ENCODE measurements at regions of chr20 and their contacts with region 1.

Region 1: DNA sequence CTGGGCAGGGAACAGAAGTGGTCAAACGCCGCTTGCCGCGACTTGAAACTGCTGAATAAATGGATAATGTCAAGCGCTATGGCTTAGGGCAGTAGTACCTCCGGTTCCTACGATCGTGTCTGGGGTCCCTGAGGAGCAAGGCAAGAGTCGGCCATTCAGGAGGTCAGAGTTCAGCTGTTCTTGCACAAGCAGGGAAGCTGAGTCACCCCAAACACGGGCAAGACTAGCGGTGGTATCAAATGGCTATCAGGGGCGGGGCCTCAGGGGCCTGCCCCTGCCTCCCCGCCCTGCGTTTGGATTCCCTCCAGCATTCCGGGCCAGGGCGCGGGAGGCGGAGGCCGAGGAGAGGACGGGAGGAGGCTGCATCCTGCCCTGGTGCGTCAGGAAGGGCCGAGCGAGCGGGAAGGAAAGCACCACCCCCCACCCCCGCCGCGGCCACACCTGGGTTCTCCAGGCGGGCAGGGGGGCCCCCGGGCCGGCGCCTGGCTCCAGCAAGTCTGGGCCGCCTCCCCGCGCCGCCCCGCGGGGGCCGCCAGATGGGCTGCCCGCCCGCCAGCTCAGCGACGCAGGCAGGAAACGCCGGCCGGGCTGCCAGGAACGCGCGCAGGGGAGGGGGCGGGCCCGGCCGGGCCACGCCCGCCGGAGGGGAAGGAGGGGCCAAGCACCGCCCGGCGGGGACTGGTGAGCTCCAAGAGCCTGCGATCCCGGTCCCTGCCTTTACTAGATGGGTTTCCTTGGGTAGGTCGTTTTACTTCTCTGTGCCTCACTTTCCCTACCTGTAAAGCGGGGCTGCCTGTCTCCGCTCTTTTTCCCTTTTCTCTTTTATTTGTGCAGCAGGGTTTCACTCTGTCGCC is 32.2 kb upstream of the ID1 start:
- DNase-seq: peak; percentile 98
- ATAC-seq: peak; percentile 86
- H3K4me3 ChIP-seq: peak overlapping the region; percentile 54 to 75
- H3K27ac ChIP-seq: peak overlapping the region; percentile 99
- H3K4me1 ChIP-seq: peaks cover 56% of the 10 kb centered on the region
- H3K27me3 ChIP-seq: no peaks in the 10 kb centered on the region
- CTCF ChIP-seq: no peak

Region 2: DNA sequence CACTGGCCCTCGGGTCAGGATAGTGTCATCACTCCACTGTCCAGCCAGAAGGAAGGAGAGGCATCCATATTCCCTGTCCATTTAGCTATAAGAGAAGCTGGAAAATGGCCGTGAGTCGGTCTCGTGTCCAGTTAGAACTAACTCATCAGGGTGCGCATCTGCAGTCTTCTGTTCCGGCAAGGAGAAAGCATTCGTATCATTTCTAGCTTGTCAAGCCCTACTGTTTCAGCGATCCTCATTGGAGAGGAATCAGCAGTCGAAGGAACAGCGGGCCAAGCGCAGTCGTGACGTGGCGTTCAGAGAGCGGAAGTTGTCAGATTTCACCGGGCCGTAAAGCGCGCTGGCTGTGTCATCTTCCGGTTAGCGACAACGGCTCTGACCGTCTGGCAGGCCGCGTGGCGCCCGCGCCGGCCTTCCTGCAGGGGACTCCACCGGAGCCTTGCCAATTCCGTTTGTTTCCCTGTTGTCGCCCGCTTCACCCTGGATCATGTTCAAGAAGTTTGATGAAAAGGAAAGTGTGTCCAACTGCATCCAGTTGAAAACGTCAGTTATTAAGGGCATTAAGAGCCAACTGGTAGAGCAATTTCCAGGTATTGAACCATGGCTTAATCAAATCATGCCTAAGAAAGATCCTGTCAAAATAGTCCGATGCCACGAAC is 25.8 kb before region 1 on chr20:
- CTCF ChIA-PET with region 1: interaction called, 10 read pairs
- POLR2A ChIA-PET with region 1: interaction called, 4 read pairs
- in situ Hi-C with region 1: no loop called
- intact Hi-C with region 1: no loop called
- DNase-seq: peak; percentile 91
- ATAC-seq: peak; percentile 88
- H3K4me3 ChIP-seq: peak overlapping the region; percentile 57 to 67
- H3K27ac ChIP-seq: peak overlapping the region; percentile 94
- H3K4me1 ChIP-seq: peaks cover 3% of the 10 kb centered on the region; the same call in 1 of the 2 replicates
- H3K27me3 ChIP-seq: no peaks in the 10 kb centered on the region
- CTCF ChIP-seq: no peak

Region 3: DNA sequence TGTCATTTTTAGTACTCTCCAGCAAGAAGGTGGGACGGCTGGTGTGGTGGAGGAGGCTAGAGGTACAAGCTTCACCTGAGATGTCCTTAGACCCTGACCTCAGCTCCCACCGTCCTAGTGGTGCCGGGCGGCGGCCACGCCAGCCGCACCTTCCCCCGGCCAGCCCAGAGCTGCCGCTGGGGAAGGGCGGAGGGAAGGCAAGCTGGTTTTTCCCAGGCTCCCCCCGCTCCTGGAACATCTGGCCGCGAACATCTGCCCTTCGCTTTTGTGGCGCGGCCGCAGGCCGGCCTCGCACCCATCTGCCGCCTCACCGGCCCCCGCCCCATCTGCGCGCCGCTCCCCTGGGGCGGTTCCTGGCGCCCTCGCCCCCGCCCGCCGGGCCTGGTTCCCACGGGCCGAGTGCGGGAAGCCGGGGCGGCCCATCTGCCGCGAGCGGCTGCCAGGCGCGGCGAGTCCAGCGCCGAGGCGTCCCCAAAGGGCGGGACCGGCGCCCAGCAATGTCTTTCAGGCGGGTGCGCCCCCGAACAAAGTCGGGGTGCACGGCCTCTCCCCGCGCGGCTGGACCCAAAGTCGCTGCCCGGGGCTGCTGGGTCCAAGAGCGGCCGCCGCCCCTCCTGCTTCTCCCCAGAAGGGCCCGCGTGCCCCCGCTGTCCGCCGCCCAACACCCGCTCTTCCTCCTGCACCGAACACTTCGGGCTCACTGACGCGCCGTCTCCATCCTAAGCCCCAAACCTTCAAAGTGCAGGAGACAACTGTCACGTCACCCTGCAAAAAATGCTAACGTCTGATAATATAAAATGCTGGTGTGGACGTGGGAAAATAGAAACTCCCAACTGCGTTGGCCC is 14.8 kb after region 1 on chr20:
- CTCF ChIA-PET with region 1: interaction called, 18 read pairs
- POLR2A ChIA-PET with region 1: interaction called, 26 read pairs
- in situ Hi-C with region 1: no loop called
- intact Hi-C with region 1: no loop called
- DNase-seq: no peak
- ATAC-seq: peak; percentile 83
- H3K4me3 ChIP-seq: peak overlapping the region; percentile 38 to 54
- H3K27ac ChIP-seq: peak overlapping the region; percentile 82
- H3K4me1 ChIP-seq: peaks cover 36% of the 10 kb centered on the region
- H3K27me3 ChIP-seq: no peaks in the 10 kb centered on the region
- CTCF ChIP-seq: no peak

Region 4: GRCh38 chr20:31595654-31596411 is 22.9 kb after region 1 on chr20:
- CTCF ChIA-PET with region 1: interaction called, 18 read pairs
- POLR2A ChIA-PET with region 1: interaction called, 35 read pairs
- in situ Hi-C with region 1: no loop called
- intact Hi-C with region 1: no loop called
- DNase-seq: no peak
- ATAC-seq: peak; percentile 74
- H3K4me3 ChIP-seq: peak overlapping the region; percentile 48 to 73
- H3K27ac ChIP-seq: peak overlapping the region; percentile 97
- H3K4me1 ChIP-seq: peaks cover 50% of the 10 kb centered on the region
- H3K27me3 ChIP-seq: no peaks in the 10 kb centered on the region
- CTCF ChIP-seq: no peak

Region 5: GRCh38 chr20:31605031-31605901 is 32.3 kb after region 1 on chr20 and contains the start of gene ID1:
- CTCF ChIA-PET with region 1: interaction called, 298 read pairs
- POLR2A ChIA-PET with region 1: interaction called, 76 read pairs
- in situ Hi-C with region 1: no loop called
- intact Hi-C with region 1: no loop called
- DNase-seq: peak; percentile 95
- ATAC-seq: peak; percentile 67
- H3K4me3 ChIP-seq: peak within 1 kb of the TSS; percentile 73 to 88
- H3K27ac ChIP-seq: peak within 1 kb of the TSS; percentile 100
- H3K4me1 ChIP-seq: peaks cover 58% of the 10 kb centered on the region
- H3K27me3 ChIP-seq: no peaks in the 10 kb centered on the region
- CTCF ChIP-seq: no peak
- total RNA-seq, gene ID1: 152 TPM

Region 6: GRCh38 chr20:31738729-31739561 is 166.0 kb after region 1 on chr20 and contains the start of gene TPX2:
- CTCF ChIA-PET with region 1: no interaction called
- POLR2A ChIA-PET with region 1: interaction called, 15 read pairs
- in situ Hi-C with region 1: no loop called
- intact Hi-C with region 1: no loop called
- DNase-seq: peak; percentile 100
- ATAC-seq: peak; percentile 99
- H3K4me3 ChIP-seq: peak within 1 kb of the TSS; percentile 71 to 79
- H3K27ac ChIP-seq: peak within 1 kb of the TSS; percentile 99
- H3K4me1 ChIP-seq: peaks cover 24% of the 10 kb centered on the region
- H3K27me3 ChIP-seq: no peaks in the 10 kb centered on the region
- CTCF ChIP-seq: no peak
- total RNA-seq, gene TPX2: 248 TPM

Measured in Panc1 (cell line).